ENCODE measurements at regions of chr1 and their contacts with region 1.

Region 1: DNA sequence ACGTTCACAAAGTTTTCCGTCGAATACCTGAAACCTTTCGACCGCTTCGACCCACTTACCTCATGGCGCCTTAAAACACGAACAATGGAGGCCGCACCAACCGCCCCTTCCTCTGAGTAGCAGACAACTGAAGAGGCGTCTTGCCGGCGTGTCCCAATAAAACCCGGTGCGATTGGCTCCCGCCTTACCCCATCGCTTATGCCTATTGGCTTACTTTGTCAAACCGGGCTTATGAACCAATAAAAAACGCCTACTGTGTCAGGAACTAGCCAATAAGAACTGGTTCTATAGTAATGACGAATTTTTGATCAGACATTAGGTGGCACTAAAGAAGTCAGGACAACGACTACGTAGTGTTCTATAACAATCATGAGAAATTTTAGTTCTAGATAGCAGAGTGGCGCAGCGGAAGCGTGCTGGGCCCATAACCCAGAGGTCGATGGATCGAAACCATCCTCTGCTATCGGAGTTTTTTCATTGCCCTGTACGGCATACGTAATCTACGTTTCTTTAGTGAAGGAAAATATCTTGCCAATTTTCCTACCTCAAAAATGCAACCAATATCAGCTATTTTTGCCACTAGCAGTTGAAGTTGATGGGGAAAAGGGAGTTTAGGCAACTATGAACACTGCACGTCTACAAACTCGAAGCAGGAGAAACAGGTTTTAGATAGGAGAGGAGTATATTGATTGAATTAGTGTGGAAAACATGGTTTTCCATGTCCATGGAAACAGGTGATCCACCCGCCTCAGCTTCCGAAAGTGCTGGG is at the start of gene ILF2:
- DNase-seq: peak; percentile 96 to 99
- H3K4me3 ChIP-seq: peak within 1 kb of the TSS; percentile 89 to 100 (median 99)
- H3K27ac ChIP-seq: peak within 1 kb of the TSS; percentile 95
- H3K4me1 ChIP-seq: peaks cover 0 to 4% (median 2%) of the 10 kb centered on the region in 4 experiments; a peak in 2 of 7 replicates
- H3K27me3 ChIP-seq: no peaks in the 10 kb centered on the region
- CTCF ChIP-seq: peak in 1 of 3 experiments; percentile 27; a peak in 1 of 4 replicates
- EP300 ChIP-seq: no peak
- POLR2A ChIP-seq: peak; percentile 90 to 95
- RAD21 ChIP-seq: no peak
- total RNA-seq, gene ILF2: 387 and 389 TPM in 2 replicates

Region 2: DNA sequence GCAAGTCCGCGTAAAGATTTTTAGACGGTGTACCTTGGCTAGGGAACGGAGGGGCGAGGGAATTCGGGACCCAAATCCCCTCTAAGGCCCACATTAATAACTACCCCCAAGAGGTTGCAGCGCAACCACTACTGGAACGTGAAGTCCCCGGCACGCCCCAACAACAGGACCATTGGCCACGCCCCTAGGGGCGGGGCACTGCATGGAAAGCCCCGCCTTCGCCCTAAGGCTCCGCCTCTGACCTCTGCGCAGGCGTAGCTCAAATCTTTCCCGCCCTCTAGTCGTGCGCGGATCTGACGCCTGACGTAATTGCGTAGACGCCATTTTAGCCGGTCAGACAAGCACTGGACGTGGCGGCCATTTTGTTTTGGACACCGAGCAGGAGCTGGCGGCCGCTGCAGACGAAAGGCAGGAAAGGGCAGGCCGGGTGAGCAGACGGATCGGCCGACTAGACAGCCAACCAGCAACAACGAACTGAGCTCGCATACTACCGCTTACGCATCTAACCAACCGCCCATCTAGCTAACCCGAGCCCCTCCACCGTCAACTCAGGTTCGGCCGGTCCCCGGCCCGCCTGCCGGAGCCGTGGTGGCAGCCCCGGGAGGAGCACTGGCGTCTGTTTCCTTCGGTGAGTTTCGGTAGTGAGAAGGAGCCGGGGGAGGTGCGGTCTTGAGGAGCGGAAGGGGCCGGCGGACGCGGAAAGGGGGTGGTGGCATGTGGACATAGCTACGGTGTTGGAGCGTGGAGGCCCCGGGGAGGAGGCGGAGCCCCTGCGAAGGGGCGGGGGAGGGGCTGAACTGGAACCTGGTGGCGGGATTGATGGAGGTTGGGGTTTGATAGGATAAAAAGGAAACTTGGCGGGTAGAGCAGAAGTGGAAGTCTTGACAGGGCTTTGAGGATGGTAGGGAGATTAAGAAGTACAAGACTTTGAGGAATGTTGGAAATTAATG is 37.1 kb before region 1 on chr1 and contains the start of gene CHTOP:
- CTCF ChIA-PET with region 1: interaction called, 4 read pairs
- POLR2A ChIA-PET with region 1: interaction called, 343 read pairs
- DNase-seq: peak; percentile 98 to 100
- H3K4me3 ChIP-seq: peak within 1 kb of the TSS; percentile 73 to 100 (median 97)
- H3K27ac ChIP-seq: peak within 1 kb of the TSS; percentile 100
- H3K4me1 ChIP-seq: peaks cover 0 to 5% (median 5%) of the 10 kb centered on the region in 4 experiments; a peak in 5 of 7 replicates
- H3K27me3 ChIP-seq: no peaks in the 10 kb centered on the region
- CTCF ChIP-seq: peak in 1 of 3 experiments; percentile 10; a peak in 1 of 4 replicates
- EP300 ChIP-seq: no peak
- POLR2A ChIP-seq: peak; percentile 82 to 97
- RAD21 ChIP-seq: no peak
- total RNA-seq, gene CHTOP: 103 and 104 TPM in 2 replicates

Region 3: GRCh38 chr1:153658400-153659174 is 12.5 kb before region 1 on chr1 and contains the start of gene SNAPIN:
- CTCF ChIA-PET with region 1: interaction called, 3 read pairs
- POLR2A ChIA-PET with region 1: interaction called, 66 read pairs
- DNase-seq: peak; percentile 64 to 96
- H3K4me3 ChIP-seq: peak within 1 kb of the TSS; percentile 71 to 98 (median 90)
- H3K27ac ChIP-seq: peak within 1 kb of the TSS; percentile 85; the same call in 1 of the 2 replicates
- H3K4me1 ChIP-seq: peaks cover 0 to 4% (median 2%) of the 10 kb centered on the region in 4 experiments; a peak in 2 of 7 replicates
- H3K27me3 ChIP-seq: no peaks in the 10 kb centered on the region
- CTCF ChIP-seq: peak in 2 of 3 experiments; percentile 4 to 6; a peak in 2 of 4 replicates
- EP300 ChIP-seq: no peak
- POLR2A ChIP-seq: peak in 1 of 2 experiments; percentile 83; a peak in 2 of 3 replicates
- RAD21 ChIP-seq: peak in 1 of 2 experiments; percentile 6; a peak in 1 of 4 replicates
- total RNA-seq, gene SNAPIN: 22.3 and 25.7 TPM in 2 replicates

Region 4: GRCh38 chr1:153749408-153750005 is 78.5 kb after region 1 on chr1:
- CTCF ChIA-PET with region 1: interaction called, 10 read pairs
- POLR2A ChIA-PET with region 1: interaction called, 9 read pairs
- DNase-seq: peak; percentile 49 to 85
- H3K4me3 ChIP-seq: no peak overlapping the region
- H3K27ac ChIP-seq: no peak overlapping the region
- H3K4me1 ChIP-seq: peaks cover 3 to 34% (median 15%) of the 10 kb centered on the region in 4 experiments; a peak in 6 of 7 replicates
- H3K27me3 ChIP-seq: peaks cover 0 to 2% (median 0%) of the 10 kb centered on the region in 4 experiments; a peak in 1 of 7 replicates
- CTCF ChIP-seq: peak; percentile 94 to 99 (median 99)
- EP300 ChIP-seq: no peak
- POLR2A ChIP-seq: no peak
- RAD21 ChIP-seq: peak; percentile 92 to 94

Region 5: GRCh38 chr1:153790966-153791647 is 120.1 kb after region 1 on chr1:
- CTCF ChIA-PET with region 1: interaction called, 11 read pairs
- POLR2A ChIA-PET with region 1: no interaction called
- DNase-seq: no peak
- H3K4me3 ChIP-seq: no peak overlapping the region
- H3K27ac ChIP-seq: no peak overlapping the region
- H3K4me1 ChIP-seq: peaks cover 6 to 29% (median 22%) of the 10 kb centered on the region in 4 experiments
- H3K27me3 ChIP-seq: no peaks in the 10 kb centered on the region; a peak in 1 of 7 replicates
- CTCF ChIP-seq: no peak
- EP300 ChIP-seq: no peak
- POLR2A ChIP-seq: no peak
- RAD21 ChIP-seq: no peak

Region 6: DNA sequence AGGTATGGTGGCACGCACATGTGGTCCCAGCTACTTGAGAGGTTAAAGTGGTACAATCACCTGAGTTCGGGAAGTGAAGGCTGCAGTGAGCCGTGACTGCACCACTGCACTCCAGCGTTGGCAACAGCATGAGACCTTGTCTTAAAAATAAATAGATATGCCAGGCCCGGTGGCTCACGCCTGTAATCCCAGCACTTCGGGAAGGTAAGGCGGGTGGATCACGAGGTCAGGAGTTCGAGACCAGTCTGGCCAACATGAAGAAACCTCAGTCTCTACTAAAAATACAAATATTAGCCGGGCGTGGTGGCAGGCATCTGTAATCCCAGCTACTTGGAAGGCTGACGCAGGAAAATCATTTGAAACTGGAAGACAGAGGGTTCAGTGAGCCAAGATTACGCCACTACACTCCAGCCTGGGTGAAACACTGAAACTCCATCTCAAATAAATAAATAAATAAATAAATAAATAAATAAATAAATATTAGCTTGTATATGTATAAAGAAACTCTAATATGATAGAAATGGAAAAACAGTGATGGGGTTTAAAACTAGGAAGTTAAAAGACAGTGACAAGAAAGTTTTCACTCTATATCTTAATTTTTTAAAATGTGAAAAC is 232.9 kb after region 1 on chr1:
- CTCF ChIA-PET with region 1: no interaction called
- POLR2A ChIA-PET with region 1: no interaction called
- DNase-seq: no peak
- H3K4me3 ChIP-seq: no peak overlapping the region
- H3K27ac ChIP-seq: no peak overlapping the region
- H3K4me1 ChIP-seq: no peaks in the 10 kb centered on the region
- H3K27me3 ChIP-seq: no peaks in the 10 kb centered on the region
- CTCF ChIP-seq: no peak
- EP300 ChIP-seq: no peak
- POLR2A ChIP-seq: no peak
- RAD21 ChIP-seq: no peak

Measured in H1 (cell line).